ENCODE measurements at regions of chr7 and their contacts with region 1.

Region 1: GRCh38 chr7:53485354-53485753 is 449.9 kb downstream of the POM121L12 start:
- DNase-seq: no peak
- ATAC-seq: no peak

Region 2: DNA sequence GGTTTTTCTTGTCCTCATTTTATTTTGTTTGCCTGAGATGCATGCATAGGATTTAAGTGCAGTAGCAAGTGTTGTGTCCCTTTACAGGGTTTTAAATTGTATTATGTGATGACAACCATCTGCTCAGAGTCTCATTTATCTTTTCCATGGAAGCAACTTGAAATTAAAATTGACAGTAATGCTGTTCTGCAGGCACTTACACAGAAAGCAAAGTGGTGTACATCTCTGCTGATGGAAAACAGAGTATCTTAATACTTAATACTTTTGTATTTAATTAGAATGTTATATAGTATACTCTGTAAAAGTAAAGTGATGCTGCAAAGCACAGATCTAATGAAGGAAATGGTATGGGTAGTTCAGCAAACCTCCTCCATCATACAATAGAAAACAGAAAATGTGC is 33.0 kb after region 1 on chr7:
- intact Hi-C with region 1: loop called in 1 of 2 experiments (anchors 1 kb)
- DNase-seq: no peak
- ATAC-seq: no peak

Measured in left cardiac atrium (tissue), 4 donors.